Head of caudate nucleus (tissue), 42 donors: ENCODE measurements at regions of chr9 and their contacts with region 1.

Region 1: DNA sequence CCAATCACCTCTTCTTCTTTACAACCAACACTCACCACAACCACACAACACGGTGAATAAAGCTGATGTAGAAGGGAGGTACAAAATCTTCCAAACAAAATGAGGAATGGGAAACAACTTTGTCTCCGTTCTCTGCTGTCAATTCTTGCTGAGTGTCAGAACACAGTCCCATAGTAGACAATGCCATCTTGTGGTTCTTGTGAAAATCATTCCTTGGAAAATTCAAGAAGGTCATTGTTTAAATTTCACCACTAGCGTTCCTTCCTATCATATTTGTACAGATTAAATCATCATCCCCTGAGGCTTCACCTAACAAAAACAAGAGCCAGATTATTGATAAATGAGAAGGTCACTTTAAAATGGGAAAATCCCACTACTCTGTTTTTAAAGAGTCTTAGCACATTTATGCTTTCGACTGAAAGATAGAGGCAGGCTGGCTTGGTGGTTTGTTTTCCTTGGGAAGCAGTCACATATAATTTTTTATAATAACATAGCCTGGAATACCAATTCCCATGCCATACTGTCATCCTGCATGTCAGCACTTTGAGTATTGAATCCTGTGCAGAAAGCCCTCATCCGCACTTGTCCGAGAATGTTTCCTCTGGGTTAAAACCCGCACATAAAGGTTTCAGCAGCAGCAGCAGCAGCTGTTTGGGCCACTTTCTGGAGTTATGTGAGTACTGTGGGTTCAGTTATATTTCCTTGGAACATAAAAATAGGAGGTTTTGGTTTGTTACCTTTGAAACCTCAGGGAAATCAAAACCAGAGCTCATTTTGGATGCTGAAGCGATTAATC is 395.0 kb upstream of the SMARCA2 start:
- DNase-seq: peak in 3 of 42 donors; percentile 7 to 26 (median 8)

Region 2: GRCh38 chr9:1460143-1460769 is 159.9 kb before region 1 on chr9:
- intact Hi-C with region 1: loop called (anchors 10 kb)
- DNase-seq: peak in 2 of 42 donors; percentile 8 to 13

Region 3: DNA sequence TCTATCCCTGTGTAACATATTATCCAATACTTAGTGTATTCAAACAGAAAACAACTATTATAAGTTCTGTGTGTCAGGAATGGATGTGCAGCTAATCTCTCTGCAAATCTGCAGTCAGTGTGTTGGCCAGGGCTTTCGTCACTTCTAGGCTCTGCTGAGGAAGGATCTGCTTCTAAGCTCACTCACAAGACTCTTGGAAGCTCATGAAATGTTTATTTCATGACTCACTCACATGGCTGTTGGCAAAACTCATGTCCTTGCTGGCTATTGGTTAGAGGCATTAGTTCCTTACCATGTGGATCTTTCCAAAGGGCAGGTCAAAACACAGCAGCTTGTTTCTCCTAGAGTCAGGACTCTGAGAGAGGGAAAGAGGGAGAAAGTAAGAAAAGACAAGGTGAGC is 27.7 kb after region 1 on chr9:
- intact Hi-C with region 1: no loop called
- DNase-seq: no peak